ENCODE measurements at regions of chr6 and their contacts with region 1.

Region 1: GRCh38 chr6:27177485-27178406 is 69.8 kb upstream of the PRSS16 start:
- DNase-seq: peak; percentile 63 to 89 (median 83)
- H3K4me3 ChIP-seq: peak overlapping the region; percentile 55 to 100 (median 95)
- H3K27ac ChIP-seq: peak overlapping the region in 53 of 59 donors; percentile 28 to 91 (median 78)
- H3K27me3 ChIP-seq: peaks cover 0 to 18% (median 0%) of the 10 kb centered on the region in 45 donors
- CTCF ChIP-seq: peak in 42 of 56 donors; percentile 4 to 55 (median 35)

Region 2: GRCh38 chr6:26459023-26459810 is 718.5 kb before region 1 on chr6:
- intact Hi-C with region 1: no loop called
- DNase-seq: peak in 1 of 10 donors; percentile 62
- H3K4me3 ChIP-seq: peak overlapping the region in 52 of 59 donors; percentile 13 to 95 (median 82)
- H3K27ac ChIP-seq: peak overlapping the region in 1 of 59 donors; percentile 72
- H3K27me3 ChIP-seq: no peaks in the 10 kb centered on the region
- CTCF ChIP-seq: no peak

Region 3: DNA sequence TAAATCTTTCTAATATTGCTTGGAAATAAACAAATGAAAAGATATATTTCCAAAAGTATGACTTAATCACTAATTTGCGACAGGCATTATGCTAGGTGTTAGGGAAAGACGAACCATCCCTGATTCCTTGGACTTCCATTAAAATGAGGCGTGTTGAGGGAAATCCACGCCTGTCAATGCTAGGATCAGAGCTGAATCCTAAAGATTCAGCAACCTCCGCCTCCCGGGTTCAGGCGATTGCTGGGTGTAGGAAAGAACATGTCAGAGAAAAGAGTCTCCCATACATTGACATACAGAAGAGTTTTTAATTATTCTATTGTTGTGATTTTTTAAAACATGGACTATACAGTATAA is 53.0 kb after region 1 on chr6:
- intact Hi-C with region 1: no loop called
- DNase-seq: no peak
- H3K4me3 ChIP-seq: no peak overlapping the region
- H3K27ac ChIP-seq: no peak overlapping the region
- H3K27me3 ChIP-seq: peaks cover 0 to 96% (median 74%) of the 10 kb centered on the region in 45 donors
- CTCF ChIP-seq: no peak

Region 4: GRCh38 chr6:27902335-27903314 is 724.9 kb after region 1 on chr6:
- intact Hi-C with region 1: loop called (anchors 2 to 5 kb)
- DNase-seq: peak; percentile 74 to 92 (median 84)
- H3K4me3 ChIP-seq: peak overlapping the region; percentile 51 to 86 (median 71)
- H3K27ac ChIP-seq: peak overlapping the region; percentile 58 to 98 (median 91)
- H3K27me3 ChIP-seq: no peaks in the 10 kb centered on the region
- CTCF ChIP-seq: peak in 19 of 56 donors; percentile 6 to 39 (median 15)

Measured in dorsolateral prefrontal cortex (tissue), 120 donors.